ENCODE measurements at regions of chr1 and their contacts with region 1.

Region 1: GRCh38 chr1:93909146-93910050 is at the start of gene GCLM:
- DNase-seq: peak; percentile 97
- ATAC-seq: peak; percentile 92
- H3K4me3 ChIP-seq: peak within 1 kb of the TSS; percentile 85
- H3K27ac ChIP-seq: peak within 1 kb of the TSS; percentile 70
- H3K4me1 ChIP-seq: peaks cover 33% of the 10 kb centered on the region
- H3K27me3 ChIP-seq: no peaks in the 10 kb centered on the region
- CTCF ChIP-seq: peak; percentile 78
- total RNA-seq, gene GCLM: 26.0 and 26.3 TPM in 2 replicates

Region 2: GRCh38 chr1:94012686-94013624 is 103.6 kb after region 1 on chr1:
- CTCF ChIA-PET with region 1: no interaction called
- POLR2A ChIA-PET with region 1: no interaction called
- intact Hi-C with region 1: no loop called
- DNase-seq: no peak
- ATAC-seq: no peak
- H3K4me3 ChIP-seq: no peak overlapping the region
- H3K27ac ChIP-seq: no peak overlapping the region
- H3K4me1 ChIP-seq: no peaks in the 10 kb centered on the region
- H3K27me3 ChIP-seq: no peaks in the 10 kb centered on the region
- CTCF ChIP-seq: no peak

Region 3: DNA sequence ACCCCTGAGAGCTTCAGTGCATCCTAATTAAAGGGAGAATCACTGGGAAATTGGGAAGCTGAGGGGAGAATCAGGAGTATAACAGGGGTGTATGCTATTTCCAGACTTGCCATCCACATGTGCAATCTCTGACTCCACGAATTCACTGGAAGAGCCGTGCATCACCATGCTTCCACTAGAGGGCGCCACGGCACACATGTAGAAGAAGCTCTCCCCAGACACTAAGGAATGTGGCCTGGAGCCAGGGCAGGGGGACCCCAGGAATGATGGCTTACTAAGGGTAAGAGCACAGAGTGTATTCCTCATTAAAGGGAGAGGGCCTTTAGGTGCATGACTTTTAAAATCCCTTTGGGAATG is 130.1 kb after region 1 on chr1:
- CTCF ChIA-PET with region 1: no interaction called
- POLR2A ChIA-PET with region 1: interaction called, 21 read pairs
- intact Hi-C with region 1: no loop called
- DNase-seq: peak; percentile 80
- ATAC-seq: peak; percentile 56
- H3K4me3 ChIP-seq: no peak overlapping the region
- H3K27ac ChIP-seq: no peak overlapping the region
- H3K4me1 ChIP-seq: peaks cover 32% of the 10 kb centered on the region
- H3K27me3 ChIP-seq: no peaks in the 10 kb centered on the region
- CTCF ChIP-seq: peak; percentile 98